ENCODE measurements at regions of chr20 and their contacts with region 1.

Region 1: GRCh38 chr20:50575847-50576720 is 65.9 kb downstream of the PTPN1 start:
- DNase-seq: peak; percentile 79 to 84
- ATAC-seq: peak; percentile 71
- H3K4me3 ChIP-seq: no peak overlapping the region
- H3K27ac ChIP-seq: no peak overlapping the region
- H3K4me1 ChIP-seq: peaks cover 0 to 3% of the 10 kb centered on the region in 2 donors
- H3K27me3 ChIP-seq: no peaks in the 10 kb centered on the region

Region 2: DNA sequence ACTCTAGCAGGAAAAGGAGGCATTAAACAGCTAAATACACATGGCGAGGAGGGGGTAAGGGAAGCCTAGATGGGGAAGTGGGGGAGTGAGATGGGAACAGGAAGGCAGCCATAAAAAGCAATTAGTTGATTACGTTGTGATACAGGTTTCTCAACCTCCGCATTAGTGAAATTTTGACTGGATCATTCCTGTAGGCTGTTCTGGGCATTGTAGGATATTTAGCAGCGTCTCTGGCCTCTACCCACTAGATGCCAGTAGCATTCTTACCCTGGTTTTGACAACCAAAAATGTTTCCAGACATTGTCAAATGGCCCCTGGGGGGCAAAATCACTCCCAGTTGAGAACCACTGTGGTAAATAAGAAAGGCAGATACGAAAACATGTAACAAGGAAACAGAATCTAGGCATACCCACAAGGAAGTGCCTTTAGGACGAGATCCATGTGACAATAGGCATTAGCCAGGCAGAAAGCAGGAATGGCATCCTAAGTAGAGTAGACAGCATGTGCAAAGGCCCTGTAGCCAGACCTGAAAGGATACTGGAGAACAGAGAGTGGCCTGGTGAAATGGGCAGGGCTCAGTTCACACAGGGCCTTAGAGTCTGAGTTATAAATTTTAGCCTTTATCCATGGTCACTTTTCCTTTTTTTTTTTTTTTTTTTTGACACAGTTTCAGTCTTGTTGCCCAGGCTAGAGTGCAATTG is 91.7 kb before region 1 on chr20:
- intact Hi-C with region 1: loop called (anchors 5 kb)
- DNase-seq: no peak
- ATAC-seq: no peak
- H3K4me3 ChIP-seq: no peak overlapping the region
- H3K27ac ChIP-seq: no peak overlapping the region
- H3K4me1 ChIP-seq: no peaks in the 10 kb centered on the region
- H3K27me3 ChIP-seq: no peaks in the 10 kb centered on the region

Region 3: GRCh38 chr20:50504231-50504823 is 71.8 kb before region 1 on chr20:
- intact Hi-C with region 1: loop called in 1 of 2 experiments (anchors 2 kb)
- DNase-seq: no peak
- ATAC-seq: peak; percentile 60
- H3K4me3 ChIP-seq: no peak overlapping the region
- H3K27ac ChIP-seq: no peak overlapping the region
- H3K4me1 ChIP-seq: no peaks in the 10 kb centered on the region
- H3K27me3 ChIP-seq: no peaks in the 10 kb centered on the region

Region 4: DNA sequence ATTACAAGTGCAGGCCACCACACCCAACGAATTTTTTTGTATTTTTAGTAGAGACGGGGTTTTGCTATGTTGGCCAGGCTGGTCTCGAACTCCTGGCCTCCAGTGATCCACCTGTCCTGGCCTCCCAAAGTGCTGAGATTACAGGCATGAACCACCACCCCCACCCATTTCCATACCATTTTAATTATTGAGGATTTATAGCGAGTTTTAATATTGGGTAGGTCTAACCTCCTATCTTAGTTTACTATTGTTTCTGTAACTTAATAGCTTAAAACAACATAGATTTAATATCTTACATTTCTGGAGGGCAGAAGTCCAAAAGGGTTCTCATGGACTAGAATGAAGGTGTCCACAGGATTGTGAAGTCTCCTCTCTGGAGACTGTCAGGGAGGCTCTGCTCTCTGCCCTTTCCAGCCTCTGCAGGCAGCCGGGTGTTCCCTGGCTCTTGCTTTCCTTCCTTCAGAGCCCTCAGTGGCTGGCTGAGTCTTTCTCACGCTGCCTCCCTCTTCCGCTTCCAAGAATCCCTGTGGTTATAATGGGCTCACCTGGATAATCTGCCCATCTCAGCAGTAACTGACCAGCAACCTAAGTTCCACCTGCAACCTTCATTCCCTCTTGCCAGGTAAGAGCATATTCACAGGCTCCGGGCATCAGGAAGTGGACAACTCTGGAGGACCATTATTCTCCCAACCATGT is 200.2 kb after region 1 on chr20:
- intact Hi-C with region 1: no loop called
- DNase-seq: peak in 1 of 2 donors; percentile 26
- ATAC-seq: no peak
- H3K4me3 ChIP-seq: no peak overlapping the region
- H3K27ac ChIP-seq: no peak overlapping the region
- H3K4me1 ChIP-seq: no peaks in the 10 kb centered on the region
- H3K27me3 ChIP-seq: no peaks in the 10 kb centered on the region

Measured in aorta (tissue), 5 donors.